Activated CD8-positive, alpha-beta T cell treated with anti-CD3 and anti-CD28 coated beads for 36 hours (primary cell): ENCODE measurements at regions of chr7 and their contacts with region 1.

Region 1: GRCh38 chr7:2403014-2403717 is at the start of gene CHST12:
- DNase-seq: peak; percentile 97
- ATAC-seq: peak; percentile 75
- H3K4me3 Mint-ChIP-seq: peak within 1 kb of the TSS; percentile 79
- H3K27ac Mint-ChIP-seq: peak within 1 kb of the TSS; percentile 74
- H3K4me1 Mint-ChIP-seq: peaks cover 47% of the 10 kb centered on the region
- H3K27me3 Mint-ChIP-seq: peaks cover 2% of the 10 kb centered on the region
- CTCF ChIP-seq: no peak
- total RNA-seq, gene CHST12: 2.9 to 4.7 TPM

Region 2: GRCh38 chr7:2266908-2267307 is 136.3 kb before region 1 on chr7:
- CTCF ChIA-PET with region 1: no interaction called
- POLR2A ChIA-PET with region 1: no interaction called
- intact Hi-C with region 1: no loop called
- DNase-seq: no peak
- ATAC-seq: no peak
- H3K4me3 Mint-ChIP-seq: no peak overlapping the region
- H3K27ac Mint-ChIP-seq: no peak overlapping the region
- H3K4me1 Mint-ChIP-seq: peaks cover 3% of the 10 kb centered on the region
- H3K27me3 Mint-ChIP-seq: no peaks in the 10 kb centered on the region
- CTCF ChIP-seq: no peak

Region 3: DNA sequence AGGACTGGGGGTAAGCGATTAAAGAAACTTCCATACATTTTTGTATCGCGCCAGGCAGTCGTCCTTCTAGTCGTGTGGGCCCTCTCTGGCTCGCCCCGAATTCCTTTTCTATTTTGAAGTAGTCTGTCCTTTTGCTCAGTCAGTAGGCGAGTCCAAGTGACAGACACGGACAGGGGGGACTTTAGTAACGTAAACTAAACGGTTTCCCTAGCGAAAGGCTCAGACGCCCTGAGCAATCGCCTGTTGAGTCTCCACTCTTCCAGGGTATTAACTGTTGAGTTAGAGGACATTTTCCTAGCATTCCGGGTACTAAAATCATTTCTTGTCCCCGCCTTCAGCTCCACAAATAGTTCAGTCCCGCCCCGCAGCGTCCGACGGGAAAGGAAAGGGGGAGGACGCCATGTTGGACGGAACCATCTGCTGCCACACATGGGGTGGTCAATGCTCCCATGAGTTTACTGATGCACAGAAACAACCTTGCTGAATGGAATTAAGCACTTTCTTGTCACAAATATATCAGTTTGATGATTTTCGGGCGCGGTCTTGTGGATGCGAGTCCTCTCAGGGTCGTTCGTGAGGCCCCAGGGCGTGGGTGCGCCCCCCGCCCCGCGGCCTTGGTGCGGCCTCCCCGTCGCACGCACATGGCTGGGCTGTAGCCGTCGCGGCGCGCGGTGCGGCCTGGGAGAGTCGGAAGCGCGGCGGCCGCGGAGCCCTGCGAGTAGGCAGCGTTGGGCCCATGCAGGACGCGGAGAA is 48.8 kb before region 1 on chr7 and contains the start of gene EIF3B:
- CTCF ChIA-PET with region 1: no interaction called
- POLR2A ChIA-PET with region 1: interaction called, 10 read pairs
- intact Hi-C with region 1: no loop called
- DNase-seq: peak; percentile 93
- ATAC-seq: peak; percentile 87
- H3K4me3 Mint-ChIP-seq: peak within 1 kb of the TSS; percentile 90
- H3K27ac Mint-ChIP-seq: peak within 1 kb of the TSS; percentile 99
- H3K4me1 Mint-ChIP-seq: peaks cover 30% of the 10 kb centered on the region
- H3K27me3 Mint-ChIP-seq: no peaks in the 10 kb centered on the region
- CTCF ChIP-seq: no peak
- total RNA-seq, gene EIF3B: 252 to 256 TPM

Region 4: GRCh38 chr7:2417981-2418481 is 14.9 kb after region 1 on chr7:
- CTCF ChIA-PET with region 1: interaction called, 6 read pairs
- POLR2A ChIA-PET with region 1: interaction called, 18 read pairs
- intact Hi-C with region 1: no loop called
- DNase-seq: peak; percentile 87
- ATAC-seq: peak; percentile 82
- H3K4me3 Mint-ChIP-seq: no peak overlapping the region
- H3K27ac Mint-ChIP-seq: peak overlapping the region; percentile 57
- H3K4me1 Mint-ChIP-seq: peaks cover 37% of the 10 kb centered on the region
- H3K27me3 Mint-ChIP-seq: no peaks in the 10 kb centered on the region
- CTCF ChIP-seq: no peak

Region 5: DNA sequence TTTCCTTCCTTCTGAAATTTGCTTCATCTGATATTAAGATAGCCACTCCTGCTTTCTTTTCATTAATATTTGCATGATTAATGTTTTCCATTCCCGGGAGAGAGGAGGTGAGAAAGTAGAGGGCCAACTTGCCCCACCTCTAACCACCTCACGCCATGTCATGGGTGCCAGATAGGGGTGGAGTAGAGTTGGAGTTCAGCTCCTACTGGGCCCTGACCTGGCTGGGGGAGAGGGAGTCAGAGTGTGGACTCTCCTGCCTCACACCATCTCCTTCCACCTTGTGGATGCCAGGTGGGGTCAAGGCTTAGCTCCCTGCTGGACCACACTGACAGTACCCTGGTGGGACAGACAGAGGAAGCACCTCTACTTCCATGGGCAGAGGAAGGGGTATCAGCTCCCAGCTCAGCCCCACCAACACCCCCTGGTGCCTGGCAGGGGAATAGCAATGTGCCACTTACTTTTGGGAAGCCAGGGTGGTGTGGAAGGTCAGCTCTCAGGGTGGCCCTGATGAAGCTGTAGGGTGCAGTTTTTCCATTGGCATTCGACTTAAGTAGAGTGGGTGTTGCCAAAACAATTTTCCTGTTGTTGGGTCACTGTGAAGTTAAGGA is 28.2 kb after region 1 on chr7:
- CTCF ChIA-PET with region 1: interaction called, 31 read pairs
- POLR2A ChIA-PET with region 1: no interaction called
- intact Hi-C with region 1: no loop called
- DNase-seq: peak; percentile 53
- ATAC-seq: peak; percentile 87
- H3K4me3 Mint-ChIP-seq: no peak overlapping the region
- H3K27ac Mint-ChIP-seq: no peak overlapping the region
- H3K4me1 Mint-ChIP-seq: peaks cover 18% of the 10 kb centered on the region
- H3K27me3 Mint-ChIP-seq: no peaks in the 10 kb centered on the region
- CTCF ChIP-seq: peak; percentile 72

Region 6: GRCh38 chr7:2471396-2471795 is 68.2 kb after region 1 on chr7:
- CTCF ChIA-PET with region 1: interaction called, 13 read pairs
- POLR2A ChIA-PET with region 1: no interaction called
- intact Hi-C with region 1: no loop called
- DNase-seq: no peak
- ATAC-seq: no peak
- H3K4me3 Mint-ChIP-seq: no peak overlapping the region
- H3K27ac Mint-ChIP-seq: no peak overlapping the region
- H3K4me1 Mint-ChIP-seq: peaks cover 2% of the 10 kb centered on the region
- H3K27me3 Mint-ChIP-seq: peaks cover 4% of the 10 kb centered on the region
- CTCF ChIP-seq: no peak

Region 7: GRCh38 chr7:2529161-2530070 is 126.2 kb after region 1 on chr7:
- CTCF ChIA-PET with region 1: no interaction called
- POLR2A ChIA-PET with region 1: no interaction called
- intact Hi-C with region 1: loop called (anchors 10 kb)
- DNase-seq: peak; percentile 81
- ATAC-seq: peak; percentile 58
- H3K4me3 Mint-ChIP-seq: peak overlapping the region; percentile 69
- H3K27ac Mint-ChIP-seq: peak overlapping the region; percentile 92
- H3K4me1 Mint-ChIP-seq: peaks cover 57% of the 10 kb centered on the region
- H3K27me3 Mint-ChIP-seq: no peaks in the 10 kb centered on the region
- CTCF ChIP-seq: no peak

Region 8: GRCh38 chr7:2903682-2904162 is 500.6 kb after region 1 on chr7:
- CTCF ChIA-PET with region 1: no interaction called
- POLR2A ChIA-PET with region 1: no interaction called
- intact Hi-C with region 1: no loop called
- DNase-seq: no peak
- ATAC-seq: no peak
- H3K4me3 Mint-ChIP-seq: no peak overlapping the region
- H3K27ac Mint-ChIP-seq: no peak overlapping the region
- H3K4me1 Mint-ChIP-seq: peaks cover 16% of the 10 kb centered on the region
- H3K27me3 Mint-ChIP-seq: no peaks in the 10 kb centered on the region
- CTCF ChIP-seq: no peak